ENCODE measurements at regions of chr4 and their contacts with region 1.

Region 1: GRCh38 chr4:7829652-7830580 is 109.7 kb downstream of the AFAP1 start:
- DNase-seq: no peak
- ATAC-seq: no peak
- H3K4me3 ChIP-seq: no peak overlapping the region
- H3K27ac ChIP-seq: peak overlapping the region in 1 of 2 donors; percentile 80
- H3K4me1 ChIP-seq: no peaks in the 10 kb centered on the region
- H3K27me3 ChIP-seq: no peaks in the 10 kb centered on the region

Region 2: DNA sequence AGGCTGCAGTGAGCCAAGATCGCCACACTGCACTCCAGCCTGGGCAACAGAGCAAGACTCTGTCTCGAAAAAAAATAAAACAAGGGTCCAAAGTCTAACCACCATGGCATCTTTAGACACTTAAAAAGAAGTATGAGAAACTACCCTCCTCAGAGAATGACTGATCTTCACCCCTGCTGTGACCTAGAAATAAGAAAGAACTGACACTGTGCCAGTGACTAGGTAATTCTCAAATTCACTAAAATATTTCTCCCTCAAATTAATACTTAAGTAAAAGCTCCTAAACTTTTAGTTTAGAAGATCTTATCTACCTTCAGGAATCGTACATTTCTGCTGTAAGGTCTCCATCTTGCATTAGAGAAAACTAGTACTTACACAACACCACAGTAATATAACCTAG is 29.4 kb after region 1 on chr4:
- intact Hi-C with region 1: loop called in 1 of 2 experiments (anchors 1 kb)
- DNase-seq: no peak
- ATAC-seq: no peak
- H3K4me3 ChIP-seq: no peak overlapping the region
- H3K27ac ChIP-seq: no peak overlapping the region
- H3K4me1 ChIP-seq: peaks cover 0 to 2% of the 10 kb centered on the region in 2 donors
- H3K27me3 ChIP-seq: no peaks in the 10 kb centered on the region